ENCODE measurements at regions of chr1 and their contacts with region 1.

Region 1: GRCh38 chr1:203216274-203217138 is 13.0 kb downstream of the CHIT1 start:
- DNase-seq: peak; percentile 75
- ATAC-seq: peak; percentile 75
- H3K4me3 Mint-ChIP-seq: peak overlapping the region; percentile 29
- H3K27ac Mint-ChIP-seq: peak overlapping the region; percentile 34
- H3K4me1 Mint-ChIP-seq: peaks cover 17% of the 10 kb centered on the region
- H3K27me3 Mint-ChIP-seq: peaks cover 6% of the 10 kb centered on the region
- CTCF ChIP-seq: peak; percentile 75

Region 2: DNA sequence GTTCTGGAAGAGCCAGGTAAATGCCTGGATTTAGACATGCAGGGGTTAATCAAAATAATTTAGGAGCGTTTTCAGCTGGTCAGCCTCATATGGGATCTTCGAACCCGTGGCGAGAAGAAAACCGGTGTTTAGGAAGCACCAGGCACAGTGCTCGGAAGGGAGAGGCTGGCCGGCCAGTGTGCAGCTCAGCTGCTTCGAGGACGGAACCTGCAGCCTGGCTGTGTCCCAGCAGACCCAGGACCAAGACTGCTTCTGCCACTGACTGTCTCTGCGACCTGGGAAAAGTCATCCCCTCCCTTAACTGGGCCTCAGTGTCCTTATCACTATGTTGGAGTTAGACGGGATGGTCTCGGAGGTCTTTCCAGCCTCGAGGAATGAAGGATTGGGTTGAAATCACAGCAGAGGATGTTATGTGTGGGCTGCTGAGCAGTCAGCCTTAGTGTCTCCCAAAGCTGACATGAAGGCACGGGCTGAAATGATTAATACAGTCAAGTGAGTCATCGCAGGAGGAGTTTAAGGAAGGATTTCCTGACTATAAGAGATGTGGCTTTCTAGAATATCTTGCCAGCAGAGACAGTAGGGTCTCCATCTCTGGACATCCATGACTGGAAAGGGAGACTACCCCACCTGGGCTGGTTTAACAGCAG is 169.4 kb before region 1 on chr1:
- CTCF ChIA-PET with region 1: interaction called, 185 read pairs
- POLR2A ChIA-PET with region 1: no interaction called
- DNase-seq: no peak
- ATAC-seq: no peak
- H3K4me3 Mint-ChIP-seq: no peak overlapping the region
- H3K27ac Mint-ChIP-seq: no peak overlapping the region
- H3K4me1 Mint-ChIP-seq: peaks cover 20% of the 10 kb centered on the region
- H3K27me3 Mint-ChIP-seq: no peaks in the 10 kb centered on the region; the same call in 1 of the 2 replicates
- CTCF ChIP-seq: no peak

Region 3: DNA sequence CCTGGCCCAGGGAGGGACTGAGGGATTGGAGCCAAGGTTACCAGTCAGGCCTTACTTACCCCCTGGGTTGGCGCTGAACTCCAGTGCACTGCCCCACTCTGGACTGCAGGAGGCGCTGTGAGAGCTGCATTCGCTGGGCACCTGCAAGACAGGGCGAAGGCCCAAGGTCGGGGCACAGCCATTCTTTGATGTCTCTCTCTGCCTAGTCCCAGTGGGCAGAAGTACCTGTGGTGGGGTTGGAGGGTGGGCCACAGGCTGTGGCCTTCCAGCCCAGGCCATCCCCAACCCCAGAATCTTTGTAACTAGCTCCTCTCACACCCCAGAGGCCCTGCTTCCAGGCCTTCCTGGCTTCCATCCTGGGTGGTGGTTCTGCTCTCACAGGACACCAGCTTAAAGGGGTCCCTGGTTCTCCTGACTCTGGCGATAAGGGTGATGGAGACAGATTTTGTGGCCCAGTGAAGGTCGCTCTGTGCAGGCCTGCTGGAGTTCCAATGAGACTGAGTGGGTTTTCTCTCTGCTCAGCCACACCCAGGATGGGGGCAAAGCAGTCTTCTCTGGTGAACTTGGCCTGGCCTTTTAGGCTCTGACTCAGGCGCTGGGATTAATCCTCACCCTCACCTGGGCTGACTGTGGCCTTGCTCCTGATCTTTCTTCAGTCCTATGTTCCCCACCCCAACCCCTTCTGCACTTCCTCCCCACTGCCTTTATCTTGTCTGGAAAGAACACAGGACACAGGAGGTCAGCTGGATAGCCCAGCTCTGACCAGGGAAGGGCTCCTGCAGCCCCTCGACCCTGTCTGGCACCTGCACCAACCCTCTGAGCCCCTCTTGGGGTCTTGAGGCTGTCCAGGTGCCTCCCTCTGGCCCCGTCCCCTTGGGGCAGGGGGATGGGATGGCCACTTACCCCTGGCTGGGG is 131.7 kb before region 1 on chr1:
- CTCF ChIA-PET with region 1: interaction called, 74 read pairs
- POLR2A ChIA-PET with region 1: no interaction called
- DNase-seq: peak; percentile 84
- ATAC-seq: peak; percentile 59
- H3K4me3 Mint-ChIP-seq: no peak overlapping the region
- H3K27ac Mint-ChIP-seq: no peak overlapping the region
- H3K4me1 Mint-ChIP-seq: peaks cover 34% of the 10 kb centered on the region
- H3K27me3 Mint-ChIP-seq: no peaks in the 10 kb centered on the region; the same call in 1 of the 2 replicates
- CTCF ChIP-seq: peak; percentile 88

Region 4: GRCh38 chr1:203148125-203148524 is 68.4 kb before region 1 on chr1:
- CTCF ChIA-PET with region 1: interaction called, 28 read pairs
- POLR2A ChIA-PET with region 1: no interaction called
- DNase-seq: peak; percentile 44
- ATAC-seq: peak; percentile 50
- H3K4me3 Mint-ChIP-seq: no peak overlapping the region
- H3K27ac Mint-ChIP-seq: no peak overlapping the region
- H3K4me1 Mint-ChIP-seq: peaks cover 87% of the 10 kb centered on the region
- H3K27me3 Mint-ChIP-seq: no peaks in the 10 kb centered on the region
- CTCF ChIP-seq: no peak

Region 5: GRCh38 chr1:203172128-203173010 is 44.1 kb before region 1 on chr1:
- CTCF ChIA-PET with region 1: interaction called, 75 read pairs
- POLR2A ChIA-PET with region 1: no interaction called
- DNase-seq: peak; percentile 88
- ATAC-seq: peak; percentile 91
- H3K4me3 Mint-ChIP-seq: no peak overlapping the region
- H3K27ac Mint-ChIP-seq: no peak overlapping the region
- H3K4me1 Mint-ChIP-seq: peaks cover 11% of the 10 kb centered on the region
- H3K27me3 Mint-ChIP-seq: no peaks in the 10 kb centered on the region
- CTCF ChIP-seq: peak; percentile 96

Region 6: GRCh38 chr1:203206129-203206687 is 10.3 kb before region 1 on chr1:
- CTCF ChIA-PET with region 1: interaction called, 20 read pairs
- POLR2A ChIA-PET with region 1: no interaction called
- DNase-seq: no peak
- ATAC-seq: no peak
- H3K4me3 Mint-ChIP-seq: no peak overlapping the region
- H3K27ac Mint-ChIP-seq: no peak overlapping the region
- H3K4me1 Mint-ChIP-seq: no peaks in the 10 kb centered on the region
- H3K27me3 Mint-ChIP-seq: peaks cover 1% of the 10 kb centered on the region; the same call in 1 of the 2 replicates
- CTCF ChIP-seq: no peak

Region 7: DNA sequence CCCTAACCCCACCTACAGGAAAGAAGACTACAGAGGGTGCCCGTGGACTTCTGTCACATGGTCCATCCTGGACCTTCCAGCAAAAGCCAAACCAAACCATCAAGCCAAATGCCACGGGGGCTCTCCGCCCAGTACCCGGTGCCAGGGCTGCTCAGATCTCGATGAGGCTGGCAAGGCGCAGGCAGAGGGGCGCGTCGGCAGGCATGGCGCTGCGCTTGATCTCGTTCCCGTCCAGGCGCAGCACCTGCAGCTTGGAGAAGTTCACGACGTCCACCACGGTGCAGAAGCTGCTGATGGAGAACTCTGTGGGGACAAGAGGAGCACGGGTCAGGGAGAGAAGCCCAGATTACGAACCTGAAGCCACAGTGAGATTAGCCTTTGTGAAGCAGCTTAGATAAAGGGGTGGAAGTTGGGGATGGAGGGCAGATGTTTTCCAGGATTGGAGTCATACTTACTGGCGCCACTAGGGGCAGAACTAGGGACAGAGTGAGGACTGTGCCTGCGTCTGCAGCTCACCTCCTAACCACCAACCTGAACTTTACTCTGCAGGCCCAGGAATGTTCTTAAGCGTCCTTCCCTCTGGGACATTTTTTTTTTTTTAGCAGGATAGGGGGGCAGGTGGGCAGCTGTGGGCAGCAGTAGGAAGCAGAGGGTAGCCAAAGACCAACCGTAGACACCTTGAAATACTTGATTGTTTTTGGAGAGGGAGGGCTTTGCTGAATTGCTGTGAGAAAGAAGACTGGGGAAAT is 125.9 kb after region 1 on chr1:
- CTCF ChIA-PET with region 1: no interaction called
- POLR2A ChIA-PET with region 1: no interaction called
- DNase-seq: peak; percentile 83
- ATAC-seq: peak; percentile 88
- H3K4me3 Mint-ChIP-seq: no peak overlapping the region
- H3K27ac Mint-ChIP-seq: no peak overlapping the region
- H3K4me1 Mint-ChIP-seq: peaks cover 40% of the 10 kb centered on the region
- H3K27me3 Mint-ChIP-seq: peaks cover 5% of the 10 kb centered on the region; the same call in 1 of the 2 replicates
- CTCF ChIP-seq: peak; percentile 84